RWPE1 (cell line): ENCODE measurements at regions of chr11 and their contacts with region 1.

Region 1: DNA sequence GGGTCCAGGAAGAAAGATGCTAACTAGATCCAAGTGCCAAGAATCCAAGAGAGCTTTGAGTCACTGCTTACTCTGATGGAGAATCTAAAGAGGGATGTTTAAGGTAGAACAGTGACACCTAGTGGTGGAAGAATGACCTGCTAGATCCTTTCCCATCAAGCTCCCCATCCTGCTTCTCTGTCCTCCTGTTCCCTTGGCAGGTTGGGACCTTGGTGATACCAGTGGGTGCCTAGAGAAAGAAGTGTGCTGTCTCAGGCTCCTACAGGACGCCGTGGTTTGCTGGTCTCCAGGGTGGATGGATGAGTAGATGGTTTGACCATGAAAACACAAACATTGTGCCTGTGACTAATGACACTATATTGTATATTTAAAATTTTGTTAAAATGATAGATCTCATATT is 383.7 kb downstream of the TMEM135 start:
- DNase-seq: peak; percentile 56
- H3K27ac ChIP-seq: no peak overlapping the region
- CTCF ChIP-seq: peak; percentile 56

Region 2: DNA sequence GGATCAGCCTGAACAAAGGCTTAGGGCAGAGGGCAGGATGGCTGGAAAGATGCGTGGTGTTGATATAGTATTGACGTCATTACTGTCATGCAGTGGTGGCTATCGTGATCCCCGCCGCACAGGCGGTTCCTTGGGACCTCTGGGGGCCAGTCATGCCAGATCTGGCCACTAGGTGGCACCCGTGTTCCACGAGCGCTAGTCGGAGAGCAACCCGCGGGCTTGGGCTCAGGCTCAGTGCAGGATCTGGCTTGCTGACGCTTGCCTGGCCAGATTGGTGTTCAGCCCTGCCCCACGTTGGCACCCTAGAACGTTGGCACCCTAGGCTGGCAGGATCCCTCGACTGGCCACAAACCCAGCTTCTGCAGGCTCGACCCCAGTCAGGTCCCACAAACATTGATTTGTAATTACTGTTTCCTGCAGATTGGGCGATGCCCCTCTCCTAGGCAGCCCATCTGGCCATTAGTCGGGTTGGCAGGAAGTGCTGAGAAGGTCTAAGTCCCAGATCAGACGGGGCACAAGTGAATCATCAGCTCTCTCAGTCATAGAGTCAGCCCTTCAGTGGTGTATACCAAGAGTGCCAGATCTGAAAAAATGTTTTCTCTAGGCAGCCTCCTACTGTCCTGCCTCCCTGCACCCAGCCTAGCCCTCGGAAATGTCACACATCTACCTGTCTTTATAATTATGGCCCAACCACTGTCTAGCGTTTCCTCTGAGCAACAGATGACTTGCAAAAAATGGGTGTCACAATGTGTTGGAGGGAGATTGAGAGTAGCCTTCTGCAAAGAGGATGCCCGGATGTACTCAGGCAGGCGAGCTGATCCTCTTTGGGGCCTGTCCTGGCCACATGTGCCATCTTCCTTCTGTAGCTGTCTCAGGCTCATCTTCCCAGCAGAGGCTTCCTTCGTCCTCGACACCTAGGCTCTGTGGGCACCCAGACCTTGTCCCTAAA is 68.4 kb before region 1 on chr11:
- CTCF ChIA-PET with region 1: interaction called, 12 read pairs
- POLR2A ChIA-PET with region 1: no interaction called
- DNase-seq: peak; percentile 86
- H3K27ac ChIP-seq: peak overlapping the region; percentile 70
- CTCF ChIP-seq: peak; percentile 98

Region 3: GRCh38 chr11:87518266-87518665 is 96.8 kb after region 1 on chr11:
- CTCF ChIA-PET with region 1: no interaction called
- POLR2A ChIA-PET with region 1: no interaction called
- DNase-seq: no peak
- H3K27ac ChIP-seq: no peak overlapping the region
- CTCF ChIP-seq: no peak